Left ventricle myocardium inferior (tissue), 1 donor: ENCODE measurements at regions of chr2 and their contacts with region 1.

Region 1: GRCh38 chr2:164841719-164842623 is at the start of gene COBLL1:
- DNase-seq: peak; percentile 78
- H3K4me3 ChIP-seq: peak within 1 kb of the TSS; percentile 90
- H3K27ac ChIP-seq: peak within 1 kb of the TSS; percentile 97
- H3K4me1 ChIP-seq: peaks cover 50% of the 10 kb centered on the region
- H3K27me3 ChIP-seq: no peaks in the 10 kb centered on the region
- CTCF ChIP-seq: peak; percentile 90
- total RNA-seq, gene COBLL1: 15.3 TPM

Region 2: GRCh38 chr2:164737612-164738081 is 104.3 kb before region 1 on chr2:
- intact Hi-C with region 1: loop called (anchors 10 kb)
- DNase-seq: no peak
- H3K4me3 ChIP-seq: no peak overlapping the region
- H3K27ac ChIP-seq: no peak overlapping the region
- H3K4me1 ChIP-seq: peaks cover 49% of the 10 kb centered on the region
- H3K27me3 ChIP-seq: no peaks in the 10 kb centered on the region
- CTCF ChIP-seq: peak; percentile 78

Region 3: DNA sequence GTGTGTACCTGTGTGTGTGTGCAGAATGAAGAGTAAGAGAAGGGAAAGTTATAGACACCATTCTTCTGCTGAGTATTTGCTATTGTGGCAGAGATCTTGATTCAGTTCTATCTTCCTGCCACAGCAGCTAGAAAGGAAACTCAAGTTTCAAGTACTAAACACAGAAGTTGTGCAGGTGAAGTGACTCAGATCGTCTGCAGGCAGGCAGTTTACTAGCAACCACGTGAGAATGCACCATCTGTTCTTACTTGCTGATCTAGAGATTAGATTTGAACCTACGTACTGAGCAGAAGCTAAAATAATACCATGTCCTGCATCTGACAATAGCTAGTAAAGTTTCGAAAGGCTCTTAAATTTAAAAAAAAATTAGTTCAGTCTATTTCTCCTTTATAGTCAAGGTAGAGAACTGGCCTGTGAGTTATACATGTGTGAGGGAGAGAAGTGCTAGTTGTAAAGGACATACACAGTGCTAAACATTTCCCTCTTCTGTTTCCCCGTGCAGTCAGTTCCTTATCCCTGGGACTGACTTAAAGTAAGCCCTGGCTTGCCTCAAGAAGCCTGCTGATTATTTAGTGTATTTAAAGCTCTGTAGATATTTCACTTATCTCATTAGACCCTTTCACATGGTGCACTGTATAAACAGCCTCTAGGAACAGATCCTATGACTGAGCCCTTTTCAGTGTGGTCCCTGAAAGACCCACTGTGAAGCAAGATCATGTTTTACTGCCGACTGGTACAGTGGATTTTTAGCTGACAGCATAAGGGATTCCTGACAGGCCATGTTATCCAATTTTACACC is 68.3 kb after region 1 on chr2:
- intact Hi-C with region 1: loop called (anchors 5 kb)
- DNase-seq: no peak
- H3K4me3 ChIP-seq: peak overlapping the region; percentile 18
- H3K27ac ChIP-seq: peak overlapping the region; percentile 43
- H3K4me1 ChIP-seq: peaks cover 52% of the 10 kb centered on the region
- H3K27me3 ChIP-seq: no peaks in the 10 kb centered on the region
- CTCF ChIP-seq: no peak